Sigmoid colon (tissue), 7 donors: ENCODE measurements at regions of chr20 and their contacts with region 1.

Region 1: DNA sequence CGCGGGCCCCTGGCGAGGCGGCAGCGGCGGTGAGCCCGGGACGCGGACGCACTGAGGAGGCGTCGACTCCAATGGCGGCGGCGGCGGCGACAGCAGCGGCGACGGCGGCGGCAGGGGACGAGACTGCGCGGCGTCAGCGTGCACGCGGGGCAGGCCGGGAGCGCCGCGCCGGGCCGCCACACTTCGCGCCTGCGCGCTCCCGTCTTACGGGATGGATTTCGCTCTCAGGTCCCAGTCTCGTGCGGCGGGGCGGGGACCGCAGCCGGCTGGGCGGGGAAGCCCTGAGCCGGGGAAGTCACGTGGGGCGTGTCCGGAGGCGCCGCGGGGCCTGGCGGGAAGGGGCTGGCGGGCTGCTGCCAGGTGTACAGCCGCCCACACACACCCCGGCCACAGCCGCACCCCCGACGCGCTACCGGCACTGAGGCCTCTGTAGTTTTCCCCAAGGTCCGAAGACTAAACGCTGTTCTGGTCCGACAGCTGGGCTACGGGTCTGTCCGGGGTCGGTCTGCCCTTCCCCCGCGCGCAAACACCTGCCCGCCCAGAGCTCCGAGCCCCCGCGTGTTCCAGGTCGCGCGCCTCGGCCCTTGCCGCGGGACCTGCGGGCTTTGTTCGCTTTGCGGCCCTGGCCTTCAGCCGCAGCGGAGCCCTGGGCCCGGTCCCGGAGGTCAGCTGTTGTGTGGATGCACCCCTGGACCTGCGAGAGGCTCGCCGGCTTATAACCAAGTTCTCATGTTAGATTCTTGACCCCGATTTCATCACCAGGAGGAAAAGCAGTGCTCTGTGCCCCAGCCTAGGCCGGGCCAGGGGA is at the start of gene YTHDF1:
- DNase-seq: peak; percentile 98
- H3K4me3 ChIP-seq: peak within 1 kb of the TSS; percentile 65 to 94 (median 92)
- H3K27ac ChIP-seq: peak within 1 kb of the TSS; percentile 78 to 84 (median 82)
- H3K4me1 ChIP-seq: peaks cover 0 to 49% (median 43%) of the 10 kb centered on the region in 4 donors
- H3K27me3 ChIP-seq: no peaks in the 10 kb centered on the region
- CTCF ChIP-seq: no peak
- EP300 ChIP-seq: peak in 1 of 4 donors; percentile 57
- POLR2A ChIP-seq: peak in 1 of 2 donors; percentile 43
- total RNA-seq, gene YTHDF1: 20.2 to 25.0 (median 23.4) TPM

Region 2: DNA sequence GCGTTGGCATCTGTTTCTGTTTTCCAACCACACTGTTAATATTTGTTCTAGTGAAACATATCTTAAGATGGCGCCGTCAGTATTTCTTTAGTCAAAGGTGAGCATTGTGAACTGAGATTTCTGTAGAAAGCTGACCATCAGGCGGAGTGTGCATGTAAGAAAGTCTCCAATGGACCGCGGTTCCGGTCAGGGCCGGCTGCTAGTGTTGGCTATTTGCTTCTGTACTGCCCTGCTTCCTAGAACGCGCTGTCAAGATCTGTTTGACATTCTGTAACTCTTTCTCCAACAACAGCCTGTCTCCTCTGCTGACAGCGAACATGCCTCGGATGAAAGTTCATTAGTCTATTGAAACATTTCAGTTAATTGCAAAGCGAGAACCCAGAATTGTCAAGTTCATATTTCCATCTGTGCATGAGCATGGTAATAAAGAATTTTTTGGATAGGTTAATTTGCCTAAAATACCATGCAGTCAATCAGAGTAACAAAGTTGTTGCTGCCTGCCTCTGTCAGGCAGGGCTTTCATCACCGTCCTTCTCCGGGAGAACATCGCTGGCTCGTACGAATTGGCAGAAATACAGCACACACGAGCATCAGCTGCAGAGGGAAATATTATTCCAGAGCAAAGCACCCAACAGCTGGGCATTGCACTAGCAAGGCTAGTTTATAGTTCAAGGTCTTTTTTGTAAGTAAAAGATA is 1595.1 kb before region 1 on chr20:
- intact Hi-C with region 1: no loop called
- DNase-seq: no peak
- H3K4me3 ChIP-seq: no peak overlapping the region
- H3K27ac ChIP-seq: no peak overlapping the region
- H3K4me1 ChIP-seq: no peaks in the 10 kb centered on the region
- H3K27me3 ChIP-seq: peaks cover 0 to 23% (median 0%) of the 10 kb centered on the region in 3 donors
- CTCF ChIP-seq: no peak
- EP300 ChIP-seq: no peak
- POLR2A ChIP-seq: no peak

Region 3: DNA sequence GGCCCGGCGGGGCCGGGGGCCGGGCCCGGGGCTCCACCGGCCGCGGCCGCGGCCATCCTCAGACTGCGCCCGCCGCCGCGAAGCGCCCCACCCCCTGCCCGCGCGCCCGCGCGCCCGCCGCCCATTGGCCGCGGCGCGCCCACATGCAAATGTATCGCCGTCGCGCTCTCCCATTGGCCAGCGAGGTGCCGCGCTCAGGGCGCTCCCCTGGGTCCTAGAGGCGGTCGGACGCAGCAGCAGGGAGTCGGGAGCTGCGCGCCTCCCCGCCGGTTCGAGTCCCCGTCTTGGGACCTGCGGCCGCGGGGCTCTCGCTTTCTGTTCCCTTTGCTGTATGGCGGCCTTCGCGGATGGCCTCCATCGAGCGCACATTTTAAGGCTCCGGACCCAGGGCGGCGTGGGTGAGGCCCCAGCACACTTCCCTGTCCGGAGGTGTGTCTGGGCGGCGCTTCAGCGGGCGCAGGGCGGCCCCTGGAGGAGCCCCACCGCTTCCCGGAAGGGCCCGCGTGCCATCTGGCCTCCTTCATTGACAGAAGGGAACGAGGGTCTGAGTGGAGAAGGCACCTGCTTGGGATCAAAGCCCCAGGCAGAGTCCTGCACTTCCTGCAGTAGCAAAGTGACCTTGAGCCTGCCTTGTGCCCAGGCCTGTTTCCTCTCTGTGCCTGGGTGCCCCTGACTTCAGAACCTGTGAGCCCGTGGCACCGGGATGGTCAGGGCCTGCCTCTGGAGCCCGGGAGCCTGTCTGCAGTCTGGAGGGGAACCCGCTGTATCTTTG is 808.8 kb before region 1 on chr20 and contains the start of gene CABLES2:
- intact Hi-C with region 1: loop called (anchors 10 kb)
- DNase-seq: peak; percentile 97
- H3K4me3 ChIP-seq: peak within 1 kb of the TSS; percentile 55 to 82 (median 71)
- H3K27ac ChIP-seq: peak within 1 kb of the TSS; percentile 55 to 78 (median 66)
- H3K4me1 ChIP-seq: peaks cover 0 to 40% (median 39%) of the 10 kb centered on the region in 4 donors
- H3K27me3 ChIP-seq: no peaks in the 10 kb centered on the region
- CTCF ChIP-seq: peak in 2 of 4 experiments; percentile 38
- EP300 ChIP-seq: no peak
- POLR2A ChIP-seq: no peak
- total RNA-seq, gene CABLES2: 1.8 to 6.5 (median 4.2) TPM

Region 4: GRCh38 chr20:62953839-62954703 is 262.2 kb before region 1 on chr20:
- intact Hi-C with region 1: loop called (anchors 10 kb)
- DNase-seq: peak; percentile 94
- H3K4me3 ChIP-seq: peak overlapping the region; percentile 6 to 50 (median 32)
- H3K27ac ChIP-seq: peak overlapping the region; percentile 86 to 97 (median 90)
- H3K4me1 ChIP-seq: peaks cover 0 to 32% (median 30%) of the 10 kb centered on the region in 4 donors
- H3K27me3 ChIP-seq: no peaks in the 10 kb centered on the region
- CTCF ChIP-seq: no peak
- EP300 ChIP-seq: no peak
- POLR2A ChIP-seq: no peak

Region 5: GRCh38 chr20:63056236-63056948 is 159.9 kb before region 1 on chr20:
- intact Hi-C with region 1: no loop called
- DNase-seq: peak; percentile 63
- H3K4me3 ChIP-seq: no peak overlapping the region
- H3K27ac ChIP-seq: no peak overlapping the region
- H3K4me1 ChIP-seq: peaks cover 0 to 9% (median 3%) of the 10 kb centered on the region in 4 donors
- H3K27me3 ChIP-seq: peaks cover 10 to 76% (median 39%) of the 10 kb centered on the region in 3 donors
- CTCF ChIP-seq: peak; percentile 73 to 97 (median 86)
- EP300 ChIP-seq: no peak
- POLR2A ChIP-seq: no peak

Region 6: DNA sequence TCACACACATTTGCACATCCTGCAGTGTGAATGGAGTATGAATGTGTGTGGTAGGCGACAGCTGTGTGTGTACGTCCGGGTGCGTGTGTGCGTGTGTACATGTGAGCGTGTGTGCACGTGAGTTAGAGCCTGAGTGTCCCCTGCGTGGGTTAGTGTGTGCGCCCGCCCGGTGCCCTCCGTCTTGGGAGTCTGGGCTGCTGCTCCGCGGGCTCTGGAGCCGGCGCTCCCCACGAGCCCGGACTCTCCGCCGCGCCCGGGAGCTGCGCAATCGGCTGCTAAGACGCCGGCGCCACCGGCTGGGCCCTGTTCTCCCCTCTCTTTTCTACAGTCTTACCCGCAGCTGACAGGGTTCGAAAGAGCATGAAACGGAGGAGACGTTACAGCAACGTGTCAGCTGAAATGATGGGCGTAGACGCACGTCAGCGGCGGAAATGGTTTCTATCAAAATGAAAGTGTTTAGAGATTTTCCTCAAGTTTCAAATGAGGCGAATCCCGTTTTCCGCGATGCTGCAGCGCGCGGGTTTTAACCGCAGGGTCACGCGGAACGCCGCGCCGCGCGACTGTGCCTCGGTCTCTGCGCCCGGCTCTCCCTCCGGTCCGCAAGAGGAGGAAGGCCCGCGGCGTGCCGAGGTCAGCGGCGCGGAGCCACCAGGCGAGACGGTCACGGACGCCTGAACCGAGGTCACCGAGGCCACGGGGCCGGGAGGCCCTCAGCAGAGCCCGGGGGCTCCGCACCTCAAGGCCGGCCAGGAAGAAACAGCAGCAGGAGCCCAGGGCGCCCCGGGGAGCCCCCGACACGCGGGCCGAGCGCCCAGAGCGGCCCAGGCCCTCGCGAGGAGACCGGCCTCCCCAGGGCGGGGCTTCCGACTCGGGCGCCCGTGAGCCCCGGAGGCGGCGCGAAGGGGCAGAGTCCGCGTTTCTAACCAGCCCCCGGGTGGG is 114.2 kb before region 1 on chr20:
- intact Hi-C with region 1: loop called (anchors 5 kb)
- DNase-seq: peak; percentile 70
- H3K4me3 ChIP-seq: peak overlapping the region; percentile 29 to 66 (median 57)
- H3K27ac ChIP-seq: peak overlapping the region; percentile 56 to 76 (median 58)
- H3K4me1 ChIP-seq: peaks cover 0 to 28% (median 19%) of the 10 kb centered on the region in 4 donors
- H3K27me3 ChIP-seq: peaks cover 0 to 40% (median 17%) of the 10 kb centered on the region in 3 donors
- CTCF ChIP-seq: no peak
- EP300 ChIP-seq: no peak
- POLR2A ChIP-seq: no peak

Region 7: GRCh38 chr20:63230800-63231268 is 14.6 kb after region 1 on chr20:
- intact Hi-C with region 1: no loop called
- DNase-seq: peak; percentile 78
- H3K4me3 ChIP-seq: no peak overlapping the region
- H3K27ac ChIP-seq: no peak overlapping the region
- H3K4me1 ChIP-seq: peaks cover 0 to 4% (median 0%) of the 10 kb centered on the region in 4 donors
- H3K27me3 ChIP-seq: peaks cover 0 to 49% (median 12%) of the 10 kb centered on the region in 3 donors
- CTCF ChIP-seq: peak; percentile 20 to 54 (median 44)
- EP300 ChIP-seq: no peak
- POLR2A ChIP-seq: no peak

Region 8: GRCh38 chr20:63272584-63273579 is 56.6 kb after region 1 on chr20 and contains the start of gene ARFGAP1:
- intact Hi-C with region 1: loop called (anchors 2 kb)
- DNase-seq: peak; percentile 94
- H3K4me3 ChIP-seq: peak within 1 kb of the TSS; percentile 86 to 95 (median 90)
- H3K27ac ChIP-seq: peak within 1 kb of the TSS; percentile 73 to 85 (median 77)
- H3K4me1 ChIP-seq: peaks cover 0 to 30% (median 25%) of the 10 kb centered on the region in 4 donors
- H3K27me3 ChIP-seq: peaks cover 0 to 7% (median 4%) of the 10 kb centered on the region in 3 donors
- CTCF ChIP-seq: no peak
- EP300 ChIP-seq: no peak
- POLR2A ChIP-seq: peak; percentile 27 to 37
- total RNA-seq, gene ARFGAP1: 20.3 to 53.7 (median 34.4) TPM

Region 9: GRCh38 chr20:63739130-63740069 is 523.2 kb after region 1 on chr20 and contains the start of gene SLC2A4RG:
- intact Hi-C with region 1: loop called (anchors 5 kb)
- DNase-seq: peak; percentile 89
- H3K4me3 ChIP-seq: peak within 1 kb of the TSS; percentile 65 to 71 (median 66)
- H3K27ac ChIP-seq: peak within 1 kb of the TSS; percentile 91 to 96 (median 96)
- H3K4me1 ChIP-seq: peaks cover 0 to 43% (median 36%) of the 10 kb centered on the region in 4 donors
- H3K27me3 ChIP-seq: peaks cover 0 to 10% (median 0%) of the 10 kb centered on the region in 3 donors
- CTCF ChIP-seq: no peak
- EP300 ChIP-seq: no peak
- POLR2A ChIP-seq: no peak
- total RNA-seq, gene SLC2A4RG: 25.2 to 78.2 (median 54.5) TPM